K562 (cell line): ENCODE measurements at regions of chr5 and their contacts with region 1.

Region 1: GRCh38 chr5:134394932-134395331 is 16.7 kb downstream of the CDKN2AIPNL start:
- DNase-seq: no peak
- ATAC-seq: no peak
- H3K4me3 ChIP-seq: no peak overlapping the region
- H3K27ac ChIP-seq: no peak overlapping the region
- H3K4me1 ChIP-seq: no peaks in the 10 kb centered on the region
- H3K27me3 ChIP-seq: no peaks in the 10 kb centered on the region
- CTCF ChIP-seq: no peak
- EP300 ChIP-seq: no peak
- POLR2A ChIP-seq: no peak
- RAD21 ChIP-seq: no peak

Region 2: GRCh38 chr5:134380346-134380745 is 14.6 kb before region 1 on chr5:
- CTCF ChIA-PET with region 1: no interaction called
- POLR2A ChIA-PET with region 1: interaction called, 10 read pairs
- in situ Hi-C with region 1: no loop called
- intact Hi-C with region 1: no loop called
- DNase-seq: no peak
- ATAC-seq: no peak
- H3K4me3 ChIP-seq: no peak overlapping the region
- H3K27ac ChIP-seq: no peak overlapping the region
- H3K4me1 ChIP-seq: no peaks in the 10 kb centered on the region
- H3K27me3 ChIP-seq: no peaks in the 10 kb centered on the region
- CTCF ChIP-seq: no peak
- EP300 ChIP-seq: no peak
- POLR2A ChIP-seq: no peak
- RAD21 ChIP-seq: no peak

Region 3: GRCh38 chr5:134845852-134846640 is 451.1 kb after region 1 on chr5 and contains the start of gene C5orf24:
- CTCF ChIA-PET with region 1: no interaction called
- POLR2A ChIA-PET with region 1: no interaction called
- in situ Hi-C with region 1: no loop called
- intact Hi-C with region 1: loop called (anchors 5 kb)
- DNase-seq: peak; percentile 90 to 97 (median 91)
- ATAC-seq: peak; percentile 93
- H3K4me3 ChIP-seq: peak within 1 kb of the TSS; percentile 93
- H3K27ac ChIP-seq: peak within 1 kb of the TSS; percentile 96
- H3K4me1 ChIP-seq: peaks cover 16 to 34% of the 10 kb centered on the region in 2 experiments; a peak in 4 of 5 replicates
- H3K27me3 ChIP-seq: no peaks in the 10 kb centered on the region
- CTCF ChIP-seq: no peak
- EP300 ChIP-seq: no peak
- POLR2A ChIP-seq: peak; percentile 95
- RAD21 ChIP-seq: no peak
- polyA plus RNA-seq, gene C5orf24: 8.9 to 10.6 TPM